Caco-2 (cell line): ENCODE measurements at regions of chr17 and their contacts with region 1.

Region 1: GRCh38 chr17:76623271-76624146 is 20.0 kb downstream of the ST6GALNAC1 start:
- DNase-seq: peak; percentile 72 to 88
- H3K4me3 ChIP-seq: no peak overlapping the region
- H3K4me3 Mint-ChIP-seq: peak overlapping the region; percentile 48
- H3K27ac Mint-ChIP-seq: no peak overlapping the region
- H3K4me1 ChIP-seq: peaks cover 9% of the 10 kb centered on the region; the same call in 1 of the 2 replicates
- H3K4me1 Mint-ChIP-seq: peaks cover 10% of the 10 kb centered on the region
- H3K27me3 ChIP-seq: no peaks in the 10 kb centered on the region
- H3K27me3 Mint-ChIP-seq: no peaks in the 10 kb centered on the region
- CTCF ChIP-seq: peak; percentile 96 to 98

Region 2: GRCh38 chr17:76567634-76568432 is 55.7 kb before region 1 on chr17:
- CTCF ChIA-PET with region 1: interaction called, 10 read pairs
- POLR2A ChIA-PET with region 1: interaction called, 3 read pairs
- intact Hi-C with region 1: no loop called
- DNase-seq: no peak
- H3K4me3 ChIP-seq: no peak overlapping the region
- H3K4me3 Mint-ChIP-seq: no peak overlapping the region
- H3K27ac Mint-ChIP-seq: peak overlapping the region; percentile 36
- H3K4me1 ChIP-seq: peaks cover 20% of the 10 kb centered on the region
- H3K4me1 Mint-ChIP-seq: peaks cover 15% of the 10 kb centered on the region
- H3K27me3 ChIP-seq: no peaks in the 10 kb centered on the region
- H3K27me3 Mint-ChIP-seq: no peaks in the 10 kb centered on the region
- CTCF ChIP-seq: no peak

Region 3: DNA sequence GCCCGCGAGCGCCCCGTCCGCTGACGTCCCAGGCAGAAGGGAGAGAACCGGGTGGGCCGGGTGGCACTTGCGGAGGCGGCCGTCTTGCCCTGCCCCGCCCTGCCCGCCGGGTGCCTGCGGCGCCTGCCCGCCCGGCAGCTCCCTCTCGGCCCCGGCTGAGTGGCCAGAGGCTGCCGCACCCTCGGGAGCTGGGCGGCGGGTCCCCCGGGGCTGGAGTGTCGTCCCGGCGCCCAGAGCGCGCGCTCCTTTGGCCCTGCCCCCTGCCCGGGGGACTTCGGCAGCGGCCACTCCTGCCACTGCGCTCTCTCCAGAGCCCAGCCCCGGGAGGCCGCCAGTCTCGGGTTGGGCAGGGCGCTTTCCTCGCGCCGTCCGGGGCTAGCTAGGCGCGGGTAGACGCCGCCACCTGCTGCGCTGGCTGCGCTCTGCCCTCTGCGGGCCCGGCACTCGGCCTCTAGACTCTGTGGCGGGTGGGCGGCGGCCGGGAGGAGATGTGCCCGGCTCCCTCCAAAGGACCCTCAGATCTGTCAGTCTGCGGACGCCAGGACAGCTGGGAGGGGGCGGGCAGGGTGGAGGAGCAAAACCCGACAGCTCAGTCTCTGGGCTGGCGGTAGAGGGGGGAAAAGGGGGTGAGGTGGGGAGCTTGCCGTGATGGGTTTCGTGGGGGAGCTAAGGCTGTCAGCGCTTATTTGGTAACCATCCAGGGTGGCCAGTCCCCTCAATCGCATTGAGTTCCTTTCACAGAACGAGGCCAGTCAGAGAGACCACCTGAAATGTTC is 37.5 kb before region 1 on chr17 and contains the start of gene ST6GALNAC2:
- CTCF ChIA-PET with region 1: interaction called, 3 read pairs
- POLR2A ChIA-PET with region 1: no interaction called
- intact Hi-C with region 1: loop called (anchors 5 kb)
- DNase-seq: peak; percentile 71 to 81
- H3K4me3 ChIP-seq: peak within 1 kb of the TSS; percentile 40
- H3K4me3 Mint-ChIP-seq: peak within 1 kb of the TSS; percentile 62
- H3K27ac Mint-ChIP-seq: no peak within 1 kb of the TSS
- H3K4me1 ChIP-seq: peaks cover 28% of the 10 kb centered on the region
- H3K4me1 Mint-ChIP-seq: peaks cover 20% of the 10 kb centered on the region
- H3K27me3 ChIP-seq: no peaks in the 10 kb centered on the region
- H3K27me3 Mint-ChIP-seq: no peaks in the 10 kb centered on the region
- CTCF ChIP-seq: peak in 1 of 2 experiments; percentile 30
- total RNA-seq, gene ST6GALNAC2: 0.77 and 2.5 TPM in 2 replicates

Region 4: GRCh38 chr17:76612977-76613851 is 10.3 kb before region 1 on chr17:
- CTCF ChIA-PET with region 1: interaction called, 29 read pairs
- POLR2A ChIA-PET with region 1: no interaction called
- intact Hi-C with region 1: no loop called
- DNase-seq: peak; percentile 87 to 94
- H3K4me3 ChIP-seq: no peak overlapping the region
- H3K4me3 Mint-ChIP-seq: peak overlapping the region; percentile 49
- H3K27ac Mint-ChIP-seq: peak overlapping the region; percentile 91
- H3K4me1 ChIP-seq: peaks cover 33% of the 10 kb centered on the region
- H3K4me1 Mint-ChIP-seq: peaks cover 38% of the 10 kb centered on the region
- H3K27me3 ChIP-seq: no peaks in the 10 kb centered on the region
- H3K27me3 Mint-ChIP-seq: no peaks in the 10 kb centered on the region
- CTCF ChIP-seq: peak in 1 of 2 experiments; percentile 33

Region 5: GRCh38 chr17:76659928-76660614 is 36.6 kb after region 1 on chr17:
- CTCF ChIA-PET with region 1: no interaction called
- POLR2A ChIA-PET with region 1: no interaction called
- intact Hi-C with region 1: no loop called
- DNase-seq: peak in 1 of 2 experiments; percentile 51
- H3K4me3 ChIP-seq: no peak overlapping the region
- H3K4me3 Mint-ChIP-seq: no peak overlapping the region
- H3K27ac Mint-ChIP-seq: no peak overlapping the region
- H3K4me1 ChIP-seq: peaks cover 28% of the 10 kb centered on the region
- H3K4me1 Mint-ChIP-seq: peaks cover 25% of the 10 kb centered on the region
- H3K27me3 ChIP-seq: no peaks in the 10 kb centered on the region
- H3K27me3 Mint-ChIP-seq: no peaks in the 10 kb centered on the region
- CTCF ChIP-seq: no peak

Region 6: GRCh38 chr17:76681222-76682137 is 58.0 kb after region 1 on chr17:
- CTCF ChIA-PET with region 1: interaction called, 12 read pairs
- POLR2A ChIA-PET with region 1: no interaction called
- intact Hi-C with region 1: loop called (anchors 2 kb)
- DNase-seq: peak; percentile 80
- H3K4me3 ChIP-seq: no peak overlapping the region
- H3K4me3 Mint-ChIP-seq: no peak overlapping the region
- H3K27ac Mint-ChIP-seq: no peak overlapping the region
- H3K4me1 ChIP-seq: peaks cover 14% of the 10 kb centered on the region
- H3K4me1 Mint-ChIP-seq: no peaks in the 10 kb centered on the region
- H3K27me3 ChIP-seq: no peaks in the 10 kb centered on the region
- H3K27me3 Mint-ChIP-seq: no peaks in the 10 kb centered on the region
- CTCF ChIP-seq: peak; percentile 87 to 91

Region 7: DNA sequence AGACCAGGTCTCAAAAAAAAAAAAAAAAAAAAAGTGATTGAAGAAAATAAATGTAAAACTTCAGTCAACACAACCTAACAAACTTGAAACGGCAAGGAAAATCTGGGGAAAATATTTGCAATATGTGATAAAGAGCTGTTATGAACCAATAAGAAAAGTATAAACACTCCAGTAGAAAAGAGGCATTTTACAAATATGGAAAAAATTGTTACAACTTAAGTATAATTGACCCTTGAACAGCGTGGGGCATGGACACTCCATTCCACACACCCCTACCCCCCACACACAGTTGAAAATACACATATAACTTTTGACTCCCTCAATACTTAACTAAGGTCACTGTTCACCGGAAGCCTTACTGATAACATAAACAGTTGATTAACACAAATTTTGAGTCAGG is 135.1 kb after region 1 on chr17:
- CTCF ChIA-PET with region 1: no interaction called
- POLR2A ChIA-PET with region 1: no interaction called
- intact Hi-C with region 1: no loop called
- DNase-seq: no peak
- H3K4me3 ChIP-seq: no peak overlapping the region
- H3K4me3 Mint-ChIP-seq: no peak overlapping the region
- H3K27ac Mint-ChIP-seq: no peak overlapping the region
- H3K4me1 ChIP-seq: peaks cover 8% of the 10 kb centered on the region
- H3K4me1 Mint-ChIP-seq: peaks cover 15% of the 10 kb centered on the region
- H3K27me3 ChIP-seq: no peaks in the 10 kb centered on the region
- H3K27me3 Mint-ChIP-seq: no peaks in the 10 kb centered on the region
- CTCF ChIP-seq: no peak